Caco-2 (cell line): ENCODE measurements at regions of chr15 and their contacts with region 1.

Region 1: DNA sequence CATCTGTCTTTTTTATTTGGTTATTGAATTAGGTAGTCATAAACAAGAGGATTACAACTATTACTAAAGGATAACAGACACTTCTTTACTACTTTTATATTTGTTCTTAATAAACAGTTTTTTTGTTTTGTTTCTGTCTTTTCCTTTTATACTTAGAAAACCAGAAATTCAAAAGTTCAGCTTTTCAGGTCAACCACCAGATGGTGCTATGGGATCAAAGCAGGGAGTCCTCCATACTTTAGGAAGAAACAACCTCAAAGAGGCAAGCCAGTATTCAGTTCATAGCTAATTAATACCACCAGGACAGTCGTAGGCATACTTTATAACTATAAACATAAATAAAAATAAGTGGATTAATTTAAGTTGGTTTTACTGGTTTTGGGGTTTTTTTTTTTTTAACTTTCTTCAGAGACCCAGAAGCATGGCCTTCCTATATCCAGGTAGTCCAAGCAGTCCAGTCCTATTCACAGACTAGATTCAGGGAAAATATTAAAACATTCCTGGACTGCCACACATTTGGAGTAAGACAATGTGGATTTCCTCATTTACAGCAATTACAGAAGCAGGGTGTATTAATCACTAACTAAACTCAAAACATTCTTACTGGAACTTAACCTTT is 16.0 kb upstream of the EID1 start:
- DNase-seq: peak; percentile 37 to 67
- H3K4me3 ChIP-seq: no peak overlapping the region
- H3K4me3 Mint-ChIP-seq: no peak overlapping the region
- H3K27ac Mint-ChIP-seq: no peak overlapping the region
- H3K4me1 ChIP-seq: no peaks in the 10 kb centered on the region
- H3K4me1 Mint-ChIP-seq: no peaks in the 10 kb centered on the region
- H3K27me3 ChIP-seq: no peaks in the 10 kb centered on the region
- H3K27me3 Mint-ChIP-seq: peaks cover 19% of the 10 kb centered on the region
- CTCF ChIP-seq: peak; percentile 77 to 83

Region 2: DNA sequence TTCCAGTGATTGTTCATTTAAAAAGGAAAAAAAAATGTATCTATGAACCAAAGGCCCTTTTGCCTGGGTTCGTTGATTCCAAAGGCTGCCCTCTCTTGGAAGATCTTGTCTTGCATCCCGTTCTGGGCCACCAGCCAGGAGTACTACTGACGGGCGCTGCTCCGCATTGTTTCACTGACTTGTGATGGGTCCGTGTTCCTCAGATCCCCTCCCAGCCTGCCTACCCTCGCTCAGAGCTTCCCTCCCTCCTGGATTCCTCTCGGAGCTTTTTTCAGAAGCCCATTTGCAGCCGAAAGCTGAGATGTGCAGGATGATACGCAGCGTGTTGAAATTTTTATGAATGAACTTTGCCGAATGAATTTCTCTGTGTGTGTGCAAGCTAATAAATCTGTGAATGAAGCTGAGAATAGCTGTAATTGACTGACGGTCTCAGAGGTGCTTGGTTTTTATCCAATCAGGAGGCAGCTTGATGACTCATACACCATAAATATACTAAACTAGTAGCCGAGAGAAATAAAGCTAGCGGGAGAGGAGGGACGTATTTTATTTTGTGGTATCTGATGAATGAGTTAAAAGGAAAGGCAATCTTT is 101.7 kb after region 1 on chr15 and contains the start of gene SHC4:
- CTCF ChIA-PET with region 1: interaction called, 20 read pairs
- POLR2A ChIA-PET with region 1: no interaction called
- intact Hi-C with region 1: loop called (anchors 1 kb)
- DNase-seq: peak in 1 of 2 experiments; percentile 35
- H3K4me3 ChIP-seq: peak within 1 kb of the TSS; percentile 32
- H3K4me3 Mint-ChIP-seq: peak within 1 kb of the TSS; percentile 70
- H3K27ac Mint-ChIP-seq: no peak within 1 kb of the TSS
- H3K4me1 ChIP-seq: no peaks in the 10 kb centered on the region
- H3K4me1 Mint-ChIP-seq: peaks cover 11% of the 10 kb centered on the region
- H3K27me3 ChIP-seq: no peaks in the 10 kb centered on the region; the same call in none of the 2 replicates
- H3K27me3 Mint-ChIP-seq: peaks cover 19% of the 10 kb centered on the region
- CTCF ChIP-seq: peak in 1 of 2 experiments; percentile 12
- total RNA-seq, gene SHC4: not detected in 2 replicates

Region 3: DNA sequence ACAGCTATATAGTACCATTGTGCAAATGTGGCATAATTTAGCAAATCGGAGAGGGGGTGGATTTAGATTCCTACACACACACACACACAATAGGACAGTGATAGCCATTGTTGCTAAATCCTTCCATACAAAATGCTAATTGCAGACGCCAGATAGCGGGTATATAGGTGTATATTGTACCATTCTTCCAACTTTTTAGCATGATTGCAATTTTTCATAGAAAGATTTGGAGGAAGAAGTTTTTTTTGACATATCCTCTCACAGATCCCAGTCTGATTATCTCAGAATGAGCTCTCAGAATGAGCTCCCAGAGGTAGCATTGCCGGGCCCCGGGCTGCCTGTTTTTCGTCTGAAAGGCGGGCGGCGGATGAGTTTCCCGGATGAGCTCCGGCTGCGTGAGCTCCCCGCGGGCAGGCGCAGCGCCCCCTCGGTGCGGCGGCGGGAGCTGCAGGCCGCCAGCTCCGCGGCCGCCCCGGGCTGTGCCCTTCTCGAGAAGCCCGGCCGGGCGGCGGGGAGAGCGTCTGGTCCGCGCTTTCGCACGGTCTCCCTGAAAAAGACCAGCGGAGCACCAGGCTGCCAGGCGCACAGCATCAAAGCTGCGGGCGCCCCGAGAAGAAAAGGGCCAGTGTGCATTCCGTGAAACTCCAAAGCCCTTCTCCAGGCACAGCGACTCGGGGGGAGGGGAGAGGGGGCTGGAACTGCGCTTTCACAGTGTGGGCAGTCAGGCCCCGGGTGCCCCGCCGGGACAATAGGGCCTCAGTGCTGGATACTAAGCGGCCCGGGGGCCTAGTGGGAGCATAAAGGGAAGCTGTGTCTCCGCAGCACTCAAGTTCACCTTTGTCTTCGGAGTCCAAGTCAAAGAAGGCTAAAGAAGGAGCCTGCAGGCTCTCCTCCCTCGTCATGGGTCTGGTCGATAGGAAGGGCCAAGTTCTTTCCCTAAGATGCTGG is 113.8 kb after region 1 on chr15:
- CTCF ChIA-PET with region 1: interaction called, 29 read pairs
- POLR2A ChIA-PET with region 1: no interaction called
- intact Hi-C with region 1: no loop called
- DNase-seq: peak; percentile 74 to 87
- H3K4me3 ChIP-seq: peak overlapping the region; percentile 50
- H3K4me3 Mint-ChIP-seq: peak overlapping the region; percentile 60
- H3K27ac Mint-ChIP-seq: no peak overlapping the region
- H3K4me1 ChIP-seq: peaks cover 11% of the 10 kb centered on the region
- H3K4me1 Mint-ChIP-seq: peaks cover 10% of the 10 kb centered on the region
- H3K27me3 ChIP-seq: no peaks in the 10 kb centered on the region
- H3K27me3 Mint-ChIP-seq: peaks cover 4% of the 10 kb centered on the region
- CTCF ChIP-seq: peak; percentile 59 to 89

Region 4: DNA sequence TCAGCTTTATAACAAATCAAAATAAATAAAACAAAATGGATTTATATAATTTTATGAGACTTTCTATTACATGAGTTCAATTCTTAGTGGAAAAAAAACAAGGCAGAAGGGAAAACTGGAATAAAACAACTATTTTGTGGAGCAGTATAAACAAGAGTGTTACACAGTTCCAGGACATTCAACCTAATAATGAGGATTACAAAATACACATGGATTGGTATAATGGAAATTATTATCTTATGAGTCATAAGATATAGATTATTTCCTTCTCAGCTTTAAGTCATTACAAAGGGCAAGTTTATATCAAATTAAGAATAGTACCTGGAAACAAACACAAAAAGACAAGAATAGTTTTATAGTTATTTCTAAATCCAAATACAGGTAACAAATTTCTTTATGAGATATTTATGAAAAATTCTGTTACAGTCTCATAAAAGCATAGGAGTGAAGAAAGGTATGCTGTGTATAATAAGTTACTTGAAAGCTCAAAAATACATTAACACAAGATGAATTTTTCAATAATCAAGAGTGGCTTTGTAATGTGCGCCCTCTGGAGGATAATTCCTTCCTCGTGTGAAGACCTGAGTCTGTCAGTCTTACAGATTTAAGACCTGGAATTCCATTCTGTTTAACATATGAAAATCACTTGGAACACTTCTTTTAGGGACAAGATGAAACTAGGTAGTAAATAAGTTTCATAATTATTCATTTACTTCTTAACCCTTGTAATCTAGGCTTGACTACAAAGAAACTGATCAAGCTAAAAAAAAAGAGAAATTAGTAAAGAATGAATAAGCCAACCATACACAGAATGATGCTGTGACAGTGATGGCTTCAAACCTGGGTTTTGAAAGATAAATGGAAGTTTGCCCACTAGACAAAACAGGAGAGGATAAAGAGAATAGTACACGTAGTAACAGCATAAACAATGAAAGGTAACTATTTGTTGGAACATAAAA is 284.0 kb after region 1 on chr15:
- CTCF ChIA-PET with region 1: no interaction called
- POLR2A ChIA-PET with region 1: no interaction called
- intact Hi-C with region 1: loop called (anchors 1 kb)
- DNase-seq: peak; percentile 37 to 54
- H3K4me3 ChIP-seq: no peak overlapping the region
- H3K4me3 Mint-ChIP-seq: no peak overlapping the region
- H3K27ac Mint-ChIP-seq: no peak overlapping the region
- H3K4me1 ChIP-seq: no peaks in the 10 kb centered on the region
- H3K4me1 Mint-ChIP-seq: peaks cover 8% of the 10 kb centered on the region
- H3K27me3 ChIP-seq: no peaks in the 10 kb centered on the region
- H3K27me3 Mint-ChIP-seq: no peaks in the 10 kb centered on the region
- CTCF ChIP-seq: peak; percentile 68 to 71

Region 5: GRCh38 chr15:49225613-49226281 is 363.8 kb after region 1 on chr15:
- CTCF ChIA-PET with region 1: interaction called, 6 read pairs
- POLR2A ChIA-PET with region 1: no interaction called
- intact Hi-C with region 1: loop called (anchors 1 kb)
- DNase-seq: peak; percentile 48 to 58
- H3K4me3 ChIP-seq: no peak overlapping the region
- H3K4me3 Mint-ChIP-seq: no peak overlapping the region
- H3K27ac Mint-ChIP-seq: no peak overlapping the region
- H3K4me1 ChIP-seq: no peaks in the 10 kb centered on the region
- H3K4me1 Mint-ChIP-seq: peaks cover 10% of the 10 kb centered on the region
- H3K27me3 ChIP-seq: no peaks in the 10 kb centered on the region
- H3K27me3 Mint-ChIP-seq: no peaks in the 10 kb centered on the region
- CTCF ChIP-seq: peak; percentile 35 to 46

Region 6: GRCh38 chr15:49421991-49422390 is 560.1 kb after region 1 on chr15:
- CTCF ChIA-PET with region 1: no interaction called
- POLR2A ChIA-PET with region 1: no interaction called
- intact Hi-C with region 1: loop called (anchors 5 kb)
- DNase-seq: peak in 1 of 2 experiments; percentile 45
- H3K4me3 ChIP-seq: no peak overlapping the region
- H3K4me3 Mint-ChIP-seq: peak overlapping the region; percentile 52
- H3K27ac Mint-ChIP-seq: no peak overlapping the region
- H3K4me1 ChIP-seq: no peaks in the 10 kb centered on the region
- H3K4me1 Mint-ChIP-seq: peaks cover 7% of the 10 kb centered on the region
- H3K27me3 ChIP-seq: no peaks in the 10 kb centered on the region
- H3K27me3 Mint-ChIP-seq: peaks cover 6% of the 10 kb centered on the region
- CTCF ChIP-seq: peak; percentile 60 to 65

Region 7: DNA sequence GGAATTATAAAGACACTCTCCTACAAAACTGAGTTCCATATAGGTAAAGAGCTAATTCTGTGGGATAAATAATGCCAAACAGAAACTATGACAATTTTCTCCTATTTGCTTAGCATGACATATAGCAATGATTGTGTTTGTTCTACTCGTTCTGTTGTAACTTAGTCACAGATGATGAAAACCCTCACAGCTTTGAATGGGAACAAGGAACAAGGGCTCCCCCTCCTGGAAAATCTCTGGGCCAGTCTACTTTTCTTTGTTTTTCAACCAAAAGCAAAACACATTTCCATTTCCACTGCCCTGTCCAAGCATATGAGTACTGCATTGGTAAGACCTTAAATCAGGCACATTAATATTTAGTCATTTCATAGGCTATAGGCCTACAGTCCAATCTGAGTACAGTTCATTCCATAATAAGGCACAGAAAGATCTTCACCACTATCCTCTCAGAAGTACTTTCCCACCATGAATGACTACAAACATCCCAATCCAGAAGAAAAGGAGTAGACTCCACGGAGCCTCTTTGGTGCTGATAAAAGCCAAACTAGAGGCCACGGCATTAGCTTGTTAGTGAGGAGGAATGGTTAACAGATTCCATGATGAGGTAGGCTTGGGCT is 1190.0 kb after region 1 on chr15:
- CTCF ChIA-PET with region 1: interaction called, 3 read pairs
- POLR2A ChIA-PET with region 1: no interaction called
- intact Hi-C with region 1: loop called (anchors 5 kb)
- DNase-seq: peak; percentile 45 to 71
- H3K4me3 ChIP-seq: no peak overlapping the region
- H3K4me3 Mint-ChIP-seq: no peak overlapping the region
- H3K27ac Mint-ChIP-seq: no peak overlapping the region
- H3K4me1 ChIP-seq: no peaks in the 10 kb centered on the region
- H3K4me1 Mint-ChIP-seq: no peaks in the 10 kb centered on the region
- H3K27me3 ChIP-seq: no peaks in the 10 kb centered on the region
- H3K27me3 Mint-ChIP-seq: no peaks in the 10 kb centered on the region
- CTCF ChIP-seq: peak; percentile 61 to 65